SK-N-SH (cell line): ENCODE measurements at regions of chr22 and their contacts with region 1.

Region 1: DNA sequence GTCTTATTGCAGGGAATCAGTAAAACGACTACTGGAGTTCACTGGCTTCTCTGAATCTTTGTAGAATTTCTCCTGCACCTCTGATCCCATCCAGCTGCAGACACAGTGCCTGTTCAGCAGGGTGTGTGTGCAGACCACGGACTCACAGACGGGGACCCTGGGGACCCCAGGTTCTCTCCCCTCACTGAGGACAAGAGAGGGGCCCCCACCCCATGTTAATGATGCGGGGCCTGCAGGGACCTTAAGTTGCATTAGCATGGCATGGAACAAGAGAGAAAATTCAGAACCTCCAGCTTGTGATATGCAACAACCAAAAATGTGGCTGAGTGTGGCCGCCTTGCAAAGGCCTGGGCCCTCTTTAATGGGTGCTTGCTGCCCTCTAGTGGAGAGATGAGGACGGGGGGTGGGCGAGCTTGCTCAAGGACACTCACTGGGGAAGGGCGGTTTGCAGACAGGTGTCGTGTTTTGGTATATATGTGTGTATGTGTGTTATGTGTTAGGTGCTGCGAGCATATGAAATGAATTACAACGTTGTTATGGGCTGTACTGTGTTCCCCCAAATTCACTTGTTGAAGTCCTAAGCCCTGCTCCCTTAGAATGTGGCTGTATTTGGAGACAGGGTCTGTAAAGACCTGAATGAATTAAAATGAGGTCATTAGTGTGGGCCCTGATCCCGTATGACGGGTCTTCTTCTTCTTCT is 84.4 kb upstream of the SEPTIN5 start:
- DNase-seq: peak; percentile 95
- H3K4me3 ChIP-seq: peak overlapping the region in 1 of 2 experiments; percentile 57; a peak in 1 of 4 replicates
- H3K27ac ChIP-seq: no peak overlapping the region
- H3K4me1 ChIP-seq: no peaks in the 10 kb centered on the region
- H3K27me3 ChIP-seq: no peaks in the 10 kb centered on the region
- CTCF ChIP-seq: peak; percentile 97
- EP300 ChIP-seq: no peak
- RAD21 ChIP-seq: peak; percentile 98

Region 2: DNA sequence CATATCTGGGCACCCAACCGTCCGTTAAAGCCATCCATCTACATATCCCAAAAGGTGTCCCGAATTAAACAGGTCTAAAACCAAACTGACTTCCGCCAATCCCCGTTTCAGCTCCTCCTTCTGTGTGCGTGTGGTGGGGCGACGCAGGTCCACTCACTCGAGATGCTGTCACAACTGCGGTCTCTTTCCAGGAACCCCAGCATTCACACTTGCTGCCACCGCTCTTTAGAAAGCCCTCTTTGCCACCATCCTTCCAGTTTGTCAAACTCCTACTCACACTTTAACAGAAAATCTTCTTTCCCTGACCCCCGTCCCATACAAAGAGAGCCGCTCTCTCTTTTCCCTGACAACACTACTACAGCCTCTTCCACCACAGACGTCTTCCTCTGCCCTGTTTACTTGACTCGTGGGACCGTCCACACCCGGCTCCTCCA is 485.9 kb before region 1 on chr22:
- CTCF ChIA-PET with region 1: interaction called, 15 read pairs
- POLR2A ChIA-PET with region 1: no interaction called
- DNase-seq: no peak
- H3K4me3 ChIP-seq: peak overlapping the region; percentile 91 to 93
- H3K27ac ChIP-seq: peak overlapping the region in 1 of 2 experiments; percentile 42; a peak in 1 of 4 replicates
- H3K4me1 ChIP-seq: peaks cover 4 to 8% of the 10 kb centered on the region in 2 experiments; a peak in 3 of 4 replicates
- H3K27me3 ChIP-seq: peaks cover 24% of the 10 kb centered on the region
- CTCF ChIP-seq: no peak
- EP300 ChIP-seq: no peak
- RAD21 ChIP-seq: no peak

Region 3: GRCh38 chr22:19214078-19214473 is 415.8 kb before region 1 on chr22:
- CTCF ChIA-PET with region 1: no interaction called
- POLR2A ChIA-PET with region 1: no interaction called
- DNase-seq: no peak
- H3K4me3 ChIP-seq: no peak overlapping the region
- H3K27ac ChIP-seq: no peak overlapping the region
- H3K4me1 ChIP-seq: peaks cover 0 to 17% of the 10 kb centered on the region in 2 experiments; a peak in 2 of 4 replicates
- H3K27me3 ChIP-seq: no peaks in the 10 kb centered on the region
- CTCF ChIP-seq: no peak
- EP300 ChIP-seq: no peak
- RAD21 ChIP-seq: no peak

Region 4: DNA sequence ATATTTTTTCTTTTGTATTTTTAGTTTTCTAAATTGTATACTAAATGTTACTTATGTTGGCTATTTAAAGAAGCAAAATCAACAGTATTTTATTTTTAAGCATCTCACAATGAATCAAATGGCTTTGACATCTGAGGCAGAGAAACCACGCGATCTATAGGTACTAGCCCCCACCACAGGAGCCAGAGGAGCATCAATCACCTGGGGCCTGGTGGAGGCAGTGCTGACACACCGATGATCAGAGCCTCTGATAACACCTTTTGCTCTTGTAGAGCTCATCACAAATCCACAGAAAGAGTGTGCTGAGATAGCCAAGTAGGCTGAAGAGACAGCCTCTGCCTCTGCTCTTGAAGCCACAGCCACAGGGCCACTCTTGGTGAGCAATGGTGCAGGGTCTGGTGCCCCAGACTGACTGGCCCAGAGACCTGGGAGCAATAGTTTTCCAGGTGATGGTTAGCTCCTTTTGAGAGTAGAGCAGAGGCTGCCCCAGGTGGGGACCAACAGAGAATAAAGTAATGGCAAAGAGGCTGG is 223.5 kb before region 1 on chr22:
- CTCF ChIA-PET with region 1: interaction called, 10 read pairs
- POLR2A ChIA-PET with region 1: no interaction called
- DNase-seq: no peak
- H3K4me3 ChIP-seq: no peak overlapping the region
- H3K27ac ChIP-seq: peak overlapping the region in 1 of 2 experiments; percentile 95; a peak in 2 of 4 replicates
- H3K4me1 ChIP-seq: peaks cover 0 to 30% of the 10 kb centered on the region in 2 experiments; a peak in 2 of 4 replicates
- H3K27me3 ChIP-seq: no peaks in the 10 kb centered on the region
- CTCF ChIP-seq: no peak
- EP300 ChIP-seq: no peak
- RAD21 ChIP-seq: peak; percentile 23; the same call in 1 of the 2 replicates

Region 5: DNA sequence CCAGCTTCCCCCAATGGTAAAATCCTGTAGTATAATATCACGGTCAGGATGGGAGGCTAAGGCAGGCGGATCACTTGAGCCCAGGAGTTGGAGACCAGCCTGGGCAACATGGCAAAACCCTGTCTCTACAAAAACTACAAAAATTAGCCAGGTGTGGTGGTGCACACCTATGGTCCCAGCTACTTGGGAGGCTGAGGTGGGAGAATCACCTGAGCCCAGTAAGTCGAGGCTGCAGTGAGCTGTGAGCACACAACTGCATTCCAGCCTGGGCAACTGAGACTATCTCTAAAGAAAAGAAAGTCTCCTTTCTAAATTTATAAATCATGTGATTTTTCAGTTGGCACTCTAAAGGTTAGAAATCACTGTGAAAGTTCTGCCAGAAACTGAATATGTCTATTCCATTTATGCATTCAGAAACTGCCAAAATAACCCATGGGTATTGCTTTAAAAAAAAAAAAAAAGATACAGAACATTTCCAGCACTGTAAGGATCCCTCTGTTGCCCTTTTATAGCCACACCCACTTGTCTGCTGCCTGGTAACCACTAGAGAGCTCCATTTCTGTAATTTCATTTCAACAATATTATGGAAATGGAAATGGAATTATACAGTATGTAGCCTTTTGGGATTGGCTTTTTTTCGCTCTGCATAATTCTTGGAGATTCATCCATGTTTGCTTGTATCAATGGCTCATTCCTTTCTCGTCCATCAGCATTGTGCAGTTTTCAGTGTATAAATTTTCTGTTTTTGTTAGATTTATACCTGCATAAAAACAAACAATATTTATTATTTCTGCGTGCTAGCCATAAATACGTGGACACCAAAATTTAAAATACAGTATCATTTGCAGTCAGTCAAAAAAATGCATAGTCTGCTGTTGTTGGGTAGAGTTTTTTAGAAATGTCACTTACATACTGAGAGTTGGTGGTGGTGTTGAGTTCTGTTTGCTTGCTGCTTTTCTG is 140.7 kb before region 1 on chr22:
- CTCF ChIA-PET with region 1: interaction called, 43 read pairs
- POLR2A ChIA-PET with region 1: no interaction called
- DNase-seq: peak; percentile 57
- H3K4me3 ChIP-seq: no peak overlapping the region
- H3K27ac ChIP-seq: no peak overlapping the region
- H3K4me1 ChIP-seq: no peaks in the 10 kb centered on the region
- H3K27me3 ChIP-seq: no peaks in the 10 kb centered on the region
- CTCF ChIP-seq: peak; percentile 35
- EP300 ChIP-seq: no peak
- RAD21 ChIP-seq: peak; percentile 45; the same call in 1 of the 2 replicates

Region 6: GRCh38 chr22:19514831-19515565 is 114.9 kb before region 1 on chr22:
- CTCF ChIA-PET with region 1: interaction called, 16 read pairs
- POLR2A ChIA-PET with region 1: no interaction called
- DNase-seq: no peak
- H3K4me3 ChIP-seq: no peak overlapping the region
- H3K27ac ChIP-seq: no peak overlapping the region
- H3K4me1 ChIP-seq: no peaks in the 10 kb centered on the region
- H3K27me3 ChIP-seq: no peaks in the 10 kb centered on the region
- CTCF ChIP-seq: no peak
- EP300 ChIP-seq: no peak
- RAD21 ChIP-seq: no peak

Region 7: GRCh38 chr22:19619144-19620009 is 10.5 kb before region 1 on chr22:
- CTCF ChIA-PET with region 1: interaction called, 28 read pairs
- POLR2A ChIA-PET with region 1: no interaction called
- DNase-seq: no peak
- H3K4me3 ChIP-seq: no peak overlapping the region
- H3K27ac ChIP-seq: no peak overlapping the region
- H3K4me1 ChIP-seq: no peaks in the 10 kb centered on the region; a peak in 1 of 4 replicates
- H3K27me3 ChIP-seq: no peaks in the 10 kb centered on the region; the same call in 1 of the 2 replicates
- CTCF ChIP-seq: no peak
- EP300 ChIP-seq: no peak
- RAD21 ChIP-seq: no peak

Region 8: DNA sequence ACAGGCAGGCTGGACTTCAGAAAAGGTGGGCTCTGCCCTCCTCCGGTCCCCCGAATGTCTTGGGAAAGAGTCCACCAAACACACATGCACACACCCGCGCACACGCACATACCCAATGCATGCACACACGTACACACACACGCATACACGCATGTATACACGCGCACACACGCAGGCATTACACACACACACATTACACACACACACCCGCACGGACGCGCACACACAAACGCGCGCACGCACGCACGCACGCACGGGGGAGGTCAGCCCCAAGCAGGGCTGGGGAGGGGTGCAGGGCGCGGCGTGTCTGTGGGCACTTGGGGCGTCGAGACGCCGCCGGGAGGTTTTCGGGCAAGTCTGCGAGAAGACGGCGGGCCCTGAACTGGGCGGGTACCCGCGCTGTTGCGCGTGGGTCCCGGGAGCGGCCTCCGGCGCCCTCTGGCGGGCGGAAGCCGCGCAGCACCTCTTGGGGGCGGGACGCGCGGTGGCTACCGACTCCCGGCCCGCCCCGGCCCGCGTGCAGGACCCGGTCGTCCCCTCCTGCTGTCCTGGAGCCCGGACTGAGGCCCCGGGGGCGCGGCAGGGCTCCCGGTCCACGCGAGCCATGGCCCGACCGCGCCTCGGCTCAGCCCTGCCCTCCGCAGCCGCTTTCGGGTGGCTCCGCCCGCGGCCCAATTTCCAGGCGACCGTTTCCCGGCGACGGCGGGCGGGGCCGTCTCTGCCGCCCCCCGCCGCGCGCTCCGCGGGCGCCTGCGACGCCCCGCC is 88.0 kb after region 1 on chr22:
- CTCF ChIA-PET with region 1: interaction called, 45 read pairs
- POLR2A ChIA-PET with region 1: no interaction called
- DNase-seq: peak; percentile 97
- H3K4me3 ChIP-seq: peak overlapping the region; percentile 62 to 67
- H3K27ac ChIP-seq: peak overlapping the region in 1 of 2 experiments; percentile 56; a peak in 1 of 4 replicates
- H3K4me1 ChIP-seq: peaks cover 0 to 42% of the 10 kb centered on the region in 2 experiments; a peak in 1 of 4 replicates
- H3K27me3 ChIP-seq: no peaks in the 10 kb centered on the region
- CTCF ChIP-seq: peak; percentile 64
- EP300 ChIP-seq: no peak
- RAD21 ChIP-seq: peak; percentile 75